ENCODE measurements at regions of chr2 and their contacts with region 1.

Region 1: GRCh38 chr2:98487806-98488651 is 43.4 kb downstream of the INPP4A start:
- DNase-seq: no peak
- ATAC-seq: peak; percentile 40
- H3K4me3 Mint-ChIP-seq: no peak overlapping the region
- H3K27ac Mint-ChIP-seq: peak overlapping the region; percentile 58
- H3K4me1 Mint-ChIP-seq: peaks cover 73% of the 10 kb centered on the region
- H3K27me3 Mint-ChIP-seq: no peaks in the 10 kb centered on the region

Region 2: DNA sequence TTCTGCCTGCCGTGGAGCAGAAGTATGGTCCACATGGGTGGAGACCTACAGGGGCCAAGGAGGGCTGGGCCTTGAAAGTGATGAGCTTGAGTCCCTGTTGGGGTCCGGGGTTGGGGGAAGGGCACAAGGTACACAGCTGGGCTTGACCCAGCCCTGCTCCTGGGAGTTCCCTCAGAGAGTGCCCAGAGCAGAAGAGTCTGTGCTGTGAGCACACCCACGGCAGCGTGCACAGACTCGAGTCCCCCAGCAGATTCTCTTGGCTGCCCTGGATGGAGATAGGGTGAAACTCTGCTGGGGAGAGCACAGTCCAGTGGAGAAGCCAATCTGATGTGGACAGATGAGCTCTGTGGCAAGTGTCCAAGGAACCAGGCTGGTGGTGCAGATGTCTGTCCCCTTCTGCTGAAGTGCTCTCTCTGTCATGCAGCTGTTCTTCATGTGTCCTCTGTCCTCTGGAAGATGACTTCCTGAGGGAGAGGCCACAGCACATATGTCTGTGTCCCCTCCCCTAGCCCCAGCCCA is 15.8 kb before region 1 on chr2:
- POLR2A ChIA-PET with region 1: interaction called, 171 read pairs
- DNase-seq: peak; percentile 28
- ATAC-seq: no peak
- H3K4me3 Mint-ChIP-seq: peak overlapping the region; percentile 76
- H3K27ac Mint-ChIP-seq: peak overlapping the region; percentile 88
- H3K4me1 Mint-ChIP-seq: peaks cover 79% of the 10 kb centered on the region
- H3K27me3 Mint-ChIP-seq: no peaks in the 10 kb centered on the region

Region 3: DNA sequence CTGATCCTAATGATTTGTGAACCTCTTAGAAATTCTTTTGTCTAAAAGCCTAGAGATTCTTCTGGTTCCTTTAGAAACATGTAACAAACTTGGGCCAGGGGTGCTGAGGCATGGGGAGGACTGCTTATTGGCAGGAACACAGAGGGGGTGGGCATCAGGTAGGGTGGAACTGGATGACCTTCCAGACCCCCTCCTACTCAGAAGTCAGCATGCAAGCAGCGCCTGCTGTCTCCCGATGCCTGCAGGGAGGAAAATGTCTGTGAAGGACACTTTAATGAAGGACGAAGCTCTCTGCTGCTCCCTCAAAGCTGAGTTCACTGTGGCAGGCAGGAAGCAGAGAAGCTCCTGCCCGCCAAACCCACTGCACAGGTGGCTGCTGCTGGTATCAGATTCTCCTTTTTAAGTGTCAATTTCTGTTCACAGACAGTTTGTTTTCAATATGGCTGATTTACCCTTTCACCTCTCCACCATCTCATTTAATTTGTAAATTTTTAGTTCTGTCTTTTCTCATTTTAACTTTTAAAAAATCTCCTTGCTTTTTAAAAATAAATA is 100.9 kb after region 1 on chr2:
- POLR2A ChIA-PET with region 1: no interaction called
- DNase-seq: no peak
- ATAC-seq: no peak
- H3K4me3 Mint-ChIP-seq: no peak overlapping the region
- H3K27ac Mint-ChIP-seq: peak overlapping the region; percentile 65
- H3K4me1 Mint-ChIP-seq: peaks cover 14% of the 10 kb centered on the region
- H3K27me3 Mint-ChIP-seq: no peaks in the 10 kb centered on the region